SK-N-SH (cell line): ENCODE measurements at regions of chr2 and their contacts with region 1.

Region 1: DNA sequence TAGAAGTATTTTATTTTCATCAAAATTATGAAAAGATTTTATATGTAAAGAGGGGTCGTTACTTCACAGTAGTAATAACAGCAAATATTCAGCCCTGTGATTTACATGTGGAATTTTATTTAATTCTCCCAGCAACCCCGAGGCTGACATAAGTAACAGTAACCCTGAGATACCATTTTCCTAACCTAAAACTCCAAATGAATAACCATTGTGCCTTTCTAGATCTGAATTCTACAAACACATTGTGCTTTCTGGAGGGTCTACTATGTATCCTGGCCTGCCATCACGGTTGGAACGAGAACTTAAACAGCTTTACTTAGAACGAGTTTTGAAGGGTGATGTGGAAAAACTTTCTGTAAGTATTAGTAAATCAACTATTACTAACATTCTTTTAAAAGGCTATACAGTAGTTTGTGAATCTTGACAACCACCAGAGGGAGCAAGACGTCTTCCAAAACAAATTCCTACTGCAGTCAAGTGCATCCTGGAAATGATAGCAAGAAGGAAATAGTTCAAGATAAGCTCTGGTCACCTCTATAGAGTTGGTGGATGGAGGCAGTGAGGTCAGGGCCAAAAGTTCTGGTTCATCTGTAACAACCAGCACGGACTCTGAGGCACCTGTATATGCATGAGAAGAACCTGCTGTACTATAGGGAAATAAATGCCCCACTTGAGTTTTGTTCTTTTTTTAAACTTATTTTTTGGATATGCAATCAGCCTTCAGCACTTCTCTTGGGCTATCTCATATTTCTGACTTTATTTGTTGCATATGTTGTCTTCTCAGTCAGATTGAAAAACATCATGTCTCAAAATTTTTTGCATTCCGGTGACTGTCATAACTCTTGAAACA is 37.4 kb downstream of the ACTR2 start:
- DNase-seq: peak; percentile 53
- H3K4me3 ChIP-seq: no peak overlapping the region; a peak in 1 of 4 replicates
- H3K27ac ChIP-seq: peak overlapping the region; percentile 55 to 65; a peak in 2 of 4 replicates
- H3K4me1 ChIP-seq: peaks cover 2 to 33% of the 10 kb centered on the region in 2 experiments; a peak in 3 of 4 replicates
- H3K27me3 ChIP-seq: no peaks in the 10 kb centered on the region
- CTCF ChIP-seq: peak; percentile 82
- EP300 ChIP-seq: no peak
- RAD21 ChIP-seq: peak; percentile 92

Region 2: GRCh38 chr2:65277791-65278483 is 12.9 kb after region 1 on chr2:
- CTCF ChIA-PET with region 1: interaction called, 21 read pairs
- POLR2A ChIA-PET with region 1: no interaction called
- DNase-seq: no peak
- H3K4me3 ChIP-seq: no peak overlapping the region
- H3K27ac ChIP-seq: no peak overlapping the region
- H3K4me1 ChIP-seq: peaks cover 0 to 24% of the 10 kb centered on the region in 2 experiments; a peak in 2 of 4 replicates
- H3K27me3 ChIP-seq: no peaks in the 10 kb centered on the region
- CTCF ChIP-seq: no peak; the same call in 1 of the 2 replicates
- EP300 ChIP-seq: no peak
- RAD21 ChIP-seq: no peak

Region 3: GRCh38 chr2:65350684-65351083 is 85.6 kb after region 1 on chr2:
- CTCF ChIA-PET with region 1: interaction called, 20 read pairs
- POLR2A ChIA-PET with region 1: no interaction called
- DNase-seq: no peak
- H3K4me3 ChIP-seq: no peak overlapping the region
- H3K27ac ChIP-seq: peak overlapping the region; percentile 22 to 90; a peak in 3 of 4 replicates
- H3K4me1 ChIP-seq: peaks cover 34 to 40% of the 10 kb centered on the region in 2 experiments
- H3K27me3 ChIP-seq: no peaks in the 10 kb centered on the region
- CTCF ChIP-seq: peak; percentile 35; the same call in 1 of the 2 replicates
- EP300 ChIP-seq: no peak
- RAD21 ChIP-seq: no peak

Region 4: DNA sequence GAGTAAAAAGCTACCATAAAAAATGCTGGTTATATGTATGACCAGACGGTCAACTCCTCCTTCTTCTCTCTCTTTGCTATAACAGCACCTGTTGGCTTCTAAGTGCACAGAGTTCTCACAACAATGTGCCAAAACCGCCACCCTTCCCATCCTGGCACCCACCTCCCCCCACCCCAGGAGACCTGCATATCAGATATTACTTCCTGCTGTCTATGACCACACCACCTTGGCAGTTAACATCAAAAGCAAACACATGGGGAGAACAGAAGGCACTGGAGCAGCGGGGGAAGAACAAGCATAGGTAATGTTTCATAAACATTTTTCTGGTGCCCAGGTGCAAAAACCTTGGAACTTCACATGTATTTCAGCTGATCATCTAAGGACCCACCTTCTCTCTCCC is 151.9 kb after region 1 on chr2:
- CTCF ChIA-PET with region 1: interaction called, 13 read pairs
- POLR2A ChIA-PET with region 1: no interaction called
- DNase-seq: no peak
- H3K4me3 ChIP-seq: no peak overlapping the region
- H3K27ac ChIP-seq: no peak overlapping the region
- H3K4me1 ChIP-seq: peaks cover 34 to 39% of the 10 kb centered on the region in 2 experiments; a peak in 3 of 4 replicates
- H3K27me3 ChIP-seq: no peaks in the 10 kb centered on the region
- CTCF ChIP-seq: no peak
- EP300 ChIP-seq: no peak
- RAD21 ChIP-seq: no peak

Region 5: GRCh38 chr2:65432227-65433190 is 167.5 kb after region 1 on chr2 and contains the start of gene SPRED2:
- CTCF ChIA-PET with region 1: interaction called, 30 read pairs
- POLR2A ChIA-PET with region 1: interaction called, 3 read pairs
- DNase-seq: peak; percentile 89
- H3K4me3 ChIP-seq: peak within 1 kb of the TSS; percentile 91 to 92
- H3K27ac ChIP-seq: peak within 1 kb of the TSS; percentile 76 to 89
- H3K4me1 ChIP-seq: peaks cover 2 to 21% of the 10 kb centered on the region in 2 experiments; a peak in 2 of 4 replicates
- H3K27me3 ChIP-seq: no peaks in the 10 kb centered on the region
- CTCF ChIP-seq: no peak; the same call in 1 of the 2 replicates
- EP300 ChIP-seq: peak; percentile 56 to 61; a peak in 2 of 4 replicates
- RAD21 ChIP-seq: peak; percentile 39
- polyA plus RNA-seq, gene SPRED2: 13.5 and 21.9 TPM in 2 replicates

Region 6: GRCh38 chr2:65554765-65555591 is 289.9 kb after region 1 on chr2:
- CTCF ChIA-PET with region 1: interaction called, 23 read pairs
- POLR2A ChIA-PET with region 1: no interaction called
- DNase-seq: no peak
- H3K4me3 ChIP-seq: no peak overlapping the region
- H3K27ac ChIP-seq: no peak overlapping the region
- H3K4me1 ChIP-seq: peaks cover 0 to 3% of the 10 kb centered on the region in 2 experiments; a peak in 1 of 4 replicates
- H3K27me3 ChIP-seq: no peaks in the 10 kb centered on the region
- CTCF ChIP-seq: no peak
- EP300 ChIP-seq: no peak
- RAD21 ChIP-seq: no peak

Region 7: GRCh38 chr2:65576861-65577601 is 312.0 kb after region 1 on chr2:
- CTCF ChIA-PET with region 1: interaction called, 30 read pairs
- POLR2A ChIA-PET with region 1: no interaction called
- DNase-seq: no peak
- H3K4me3 ChIP-seq: peak overlapping the region in 1 of 2 experiments; percentile 42; a peak in 1 of 4 replicates
- H3K27ac ChIP-seq: peak overlapping the region; percentile 59 to 97; a peak in 3 of 4 replicates
- H3K4me1 ChIP-seq: peaks cover 0 to 16% of the 10 kb centered on the region in 2 experiments; a peak in 2 of 4 replicates
- H3K27me3 ChIP-seq: no peaks in the 10 kb centered on the region
- CTCF ChIP-seq: no peak
- EP300 ChIP-seq: peak in 1 of 2 experiments; percentile 67; a peak in 1 of 4 replicates
- RAD21 ChIP-seq: no peak